B cell (primary cell): ENCODE measurements at regions of chr22 and their contacts with region 1.

Region 1: GRCh38 chr22:24244101-24244787 is 638 bp downstream of the GGT5 start:
- DNase-seq: no peak
- ATAC-seq: no peak
- H3K4me3 ChIP-seq: no peak overlapping the region
- H3K4me3 Mint-ChIP-seq: peak overlapping the region; percentile 11
- H3K27ac ChIP-seq: no peak overlapping the region
- H3K27ac Mint-ChIP-seq: no peak overlapping the region
- H3K4me1 ChIP-seq: peaks cover 14 to 25% of the 10 kb centered on the region in 2 donors
- H3K4me1 Mint-ChIP-seq: peaks cover 21% of the 10 kb centered on the region
- H3K27me3 ChIP-seq: no peaks in the 10 kb centered on the region
- H3K27me3 Mint-ChIP-seq: no peaks in the 10 kb centered on the region
- CTCF ChIP-seq: no peak

Region 2: GRCh38 chr22:24106385-24107381 is 137.6 kb before region 1 on chr22:
- CTCF ChIA-PET with region 1: interaction called, 4 read pairs
- POLR2A ChIA-PET with region 1: no interaction called
- intact Hi-C with region 1: loop called (anchors 5 kb)
- DNase-seq: peak; percentile 66
- ATAC-seq: peak; percentile 69
- H3K4me3 ChIP-seq: no peak overlapping the region
- H3K4me3 Mint-ChIP-seq: no peak overlapping the region
- H3K27ac ChIP-seq: no peak overlapping the region
- H3K27ac Mint-ChIP-seq: peak overlapping the region; percentile 37
- H3K4me1 ChIP-seq: no peaks in the 10 kb centered on the region
- H3K4me1 Mint-ChIP-seq: no peaks in the 10 kb centered on the region
- H3K27me3 ChIP-seq: no peaks in the 10 kb centered on the region
- H3K27me3 Mint-ChIP-seq: no peaks in the 10 kb centered on the region
- CTCF ChIP-seq: peak; percentile 63

Region 3: DNA sequence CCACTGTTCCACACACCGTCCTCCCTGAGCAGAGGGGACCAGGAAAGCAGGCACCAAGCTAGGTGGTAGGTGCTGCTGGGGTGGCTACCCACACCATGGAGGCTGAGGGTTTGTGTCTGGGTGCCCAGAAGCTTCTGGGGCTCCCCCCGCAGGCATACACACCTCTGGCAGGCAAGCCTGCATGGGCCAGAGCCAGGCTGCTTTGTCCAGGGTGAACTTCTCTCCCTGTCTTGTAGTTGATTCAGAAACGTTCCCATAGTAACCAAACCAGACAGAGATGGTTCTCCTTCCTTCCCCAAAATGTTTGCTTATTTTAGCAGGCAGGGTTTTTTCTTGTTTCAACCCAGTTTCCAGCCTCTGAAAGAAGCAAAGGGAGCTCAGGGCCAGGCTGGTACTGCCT is 103.9 kb before region 1 on chr22:
- CTCF ChIA-PET with region 1: no interaction called
- POLR2A ChIA-PET with region 1: no interaction called
- intact Hi-C with region 1: no loop called
- DNase-seq: peak; percentile 25
- ATAC-seq: peak; percentile 41
- H3K4me3 ChIP-seq: no peak overlapping the region
- H3K4me3 Mint-ChIP-seq: no peak overlapping the region
- H3K27ac ChIP-seq: peak overlapping the region; percentile 11 to 33
- H3K27ac Mint-ChIP-seq: no peak overlapping the region
- H3K4me1 ChIP-seq: peaks cover 29 to 45% of the 10 kb centered on the region in 2 donors
- H3K4me1 Mint-ChIP-seq: peaks cover 43% of the 10 kb centered on the region
- H3K27me3 ChIP-seq: no peaks in the 10 kb centered on the region
- H3K27me3 Mint-ChIP-seq: no peaks in the 10 kb centered on the region
- CTCF ChIP-seq: no peak

Region 4: GRCh38 chr22:24189249-24190158 is 54.7 kb before region 1 on chr22:
- CTCF ChIA-PET with region 1: interaction called, 7 read pairs
- POLR2A ChIA-PET with region 1: no interaction called
- intact Hi-C with region 1: loop called (anchors 10 kb)
- DNase-seq: peak; percentile 55
- ATAC-seq: peak; percentile 70
- H3K4me3 ChIP-seq: no peak overlapping the region
- H3K4me3 Mint-ChIP-seq: no peak overlapping the region
- H3K27ac ChIP-seq: no peak overlapping the region
- H3K27ac Mint-ChIP-seq: no peak overlapping the region
- H3K4me1 ChIP-seq: peaks cover 0 to 9% of the 10 kb centered on the region in 2 donors
- H3K4me1 Mint-ChIP-seq: no peaks in the 10 kb centered on the region
- H3K27me3 ChIP-seq: no peaks in the 10 kb centered on the region
- H3K27me3 Mint-ChIP-seq: no peaks in the 10 kb centered on the region
- CTCF ChIP-seq: peak; percentile 50

Region 5: GRCh38 chr22:24230911-24231656 is 13.2 kb before region 1 on chr22:
- CTCF ChIA-PET with region 1: interaction called, 11 read pairs
- POLR2A ChIA-PET with region 1: no interaction called
- intact Hi-C with region 1: no loop called
- DNase-seq: peak; percentile 65
- ATAC-seq: peak; percentile 74
- H3K4me3 ChIP-seq: no peak overlapping the region
- H3K4me3 Mint-ChIP-seq: no peak overlapping the region
- H3K27ac ChIP-seq: no peak overlapping the region
- H3K27ac Mint-ChIP-seq: no peak overlapping the region
- H3K4me1 ChIP-seq: no peaks in the 10 kb centered on the region
- H3K4me1 Mint-ChIP-seq: peaks cover 1% of the 10 kb centered on the region
- H3K27me3 ChIP-seq: no peaks in the 10 kb centered on the region
- H3K27me3 Mint-ChIP-seq: no peaks in the 10 kb centered on the region
- CTCF ChIP-seq: peak; percentile 63

Region 6: DNA sequence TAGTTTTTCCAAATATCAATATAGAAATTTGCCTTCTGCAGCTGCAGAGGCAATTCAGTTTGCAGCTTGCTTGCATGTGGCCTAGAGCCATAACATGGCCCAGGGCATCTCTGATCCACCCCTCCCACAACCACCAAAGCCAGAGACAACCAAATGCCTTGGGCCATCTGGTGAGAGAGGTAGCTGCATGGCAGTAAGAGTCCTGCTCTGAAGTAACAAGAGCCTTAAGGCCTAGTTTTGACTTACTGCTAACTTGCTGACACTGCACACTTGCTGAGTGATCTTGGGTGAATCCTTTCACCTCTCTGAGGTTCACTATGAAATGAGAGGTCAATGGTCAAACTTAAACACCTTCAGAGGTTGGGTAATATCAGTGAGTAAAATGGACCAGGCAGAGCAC is 21.5 kb after region 1 on chr22:
- CTCF ChIA-PET with region 1: no interaction called
- POLR2A ChIA-PET with region 1: no interaction called
- intact Hi-C with region 1: no loop called
- DNase-seq: no peak
- ATAC-seq: no peak
- H3K4me3 ChIP-seq: no peak overlapping the region
- H3K4me3 Mint-ChIP-seq: no peak overlapping the region
- H3K27ac ChIP-seq: no peak overlapping the region
- H3K27ac Mint-ChIP-seq: no peak overlapping the region
- H3K4me1 ChIP-seq: peaks cover 11 to 19% of the 10 kb centered on the region in 2 donors
- H3K4me1 Mint-ChIP-seq: peaks cover 26% of the 10 kb centered on the region
- H3K27me3 ChIP-seq: no peaks in the 10 kb centered on the region
- H3K27me3 Mint-ChIP-seq: no peaks in the 10 kb centered on the region
- CTCF ChIP-seq: no peak